Mammary epithelial cell (primary cell): ENCODE measurements at regions of chr6 and their contacts with region 1.

Region 1: GRCh38 chr6:137811121-137811915 is 55.7 kb upstream of the TNFAIP3 start:
- DNase-seq: peak; percentile 93
- H3K4me3 ChIP-seq: no peak overlapping the region
- H3K27ac ChIP-seq: peak overlapping the region; percentile 89
- H3K4me1 ChIP-seq: peaks cover 48% of the 10 kb centered on the region
- H3K27me3 ChIP-seq: no peaks in the 10 kb centered on the region
- CTCF ChIP-seq: no peak

Region 2: DNA sequence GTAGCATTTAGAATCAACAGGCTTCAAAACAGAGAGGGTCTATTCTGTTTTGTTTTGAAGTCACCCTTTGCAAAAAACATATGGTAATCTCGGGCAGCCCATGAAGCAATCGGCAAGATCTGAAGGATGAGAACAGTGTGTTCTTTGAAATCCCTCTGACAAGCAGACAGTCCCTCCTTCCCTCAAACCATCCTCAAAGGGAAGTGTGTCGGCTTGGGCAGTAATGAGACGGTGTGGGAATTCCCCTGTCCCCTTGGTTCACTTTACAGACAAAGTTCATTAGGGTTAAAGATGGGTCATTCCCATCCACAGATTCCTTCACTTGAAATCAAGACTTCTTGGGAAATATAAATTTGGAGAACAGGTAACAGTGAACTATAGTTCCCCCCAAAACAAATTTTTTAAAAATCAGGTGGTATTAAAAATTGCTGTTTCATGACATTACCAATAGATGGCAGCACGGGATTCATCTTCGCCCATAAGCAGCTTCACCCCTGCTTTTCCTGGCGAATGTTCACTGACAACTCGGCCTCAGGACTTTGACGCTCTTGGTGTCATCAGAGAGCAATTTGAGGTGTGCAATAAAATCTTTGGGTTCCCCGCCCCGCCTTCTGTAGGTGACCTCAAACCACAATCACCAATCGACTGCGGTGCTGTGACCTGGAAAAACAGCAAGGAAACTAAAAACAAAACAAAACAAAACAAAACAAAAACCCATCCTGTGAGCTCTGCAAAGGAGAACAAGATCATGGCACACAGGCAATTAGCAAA is 103.5 kb before region 1 on chr6:
- CTCF ChIA-PET with region 1: no interaction called
- dilution Hi-C with region 1: no loop called
- in situ Hi-C with region 1: loop called in 1 of 2 experiments (anchors 10 kb)
- intact Hi-C with region 1: loop called (anchors 2 kb)
- DNase-seq: peak; percentile 92
- H3K4me3 ChIP-seq: no peak overlapping the region
- H3K27ac ChIP-seq: peak overlapping the region; percentile 64
- H3K4me1 ChIP-seq: peaks cover 7% of the 10 kb centered on the region
- H3K27me3 ChIP-seq: no peaks in the 10 kb centered on the region
- CTCF ChIP-seq: peak; percentile 65 to 75

Region 3: GRCh38 chr6:137764464-137764863 is 46.9 kb before region 1 on chr6:
- CTCF ChIA-PET with region 1: no interaction called
- dilution Hi-C with region 1: no loop called
- in situ Hi-C with region 1: no loop called
- intact Hi-C with region 1: loop called (anchors 2 kb)
- DNase-seq: peak; percentile 92
- H3K4me3 ChIP-seq: no peak overlapping the region
- H3K27ac ChIP-seq: peak overlapping the region; percentile 83
- H3K4me1 ChIP-seq: peaks cover 41% of the 10 kb centered on the region
- H3K27me3 ChIP-seq: no peaks in the 10 kb centered on the region
- CTCF ChIP-seq: no peak

Region 4: GRCh38 chr6:137776786-137777686 is 34.3 kb before region 1 on chr6:
- CTCF ChIA-PET with region 1: interaction called, 11 read pairs
- dilution Hi-C with region 1: no loop called
- in situ Hi-C with region 1: no loop called
- intact Hi-C with region 1: no loop called
- DNase-seq: no peak
- H3K4me3 ChIP-seq: no peak overlapping the region
- H3K27ac ChIP-seq: no peak overlapping the region
- H3K4me1 ChIP-seq: no peaks in the 10 kb centered on the region
- H3K27me3 ChIP-seq: no peaks in the 10 kb centered on the region
- CTCF ChIP-seq: no peak

Region 5: DNA sequence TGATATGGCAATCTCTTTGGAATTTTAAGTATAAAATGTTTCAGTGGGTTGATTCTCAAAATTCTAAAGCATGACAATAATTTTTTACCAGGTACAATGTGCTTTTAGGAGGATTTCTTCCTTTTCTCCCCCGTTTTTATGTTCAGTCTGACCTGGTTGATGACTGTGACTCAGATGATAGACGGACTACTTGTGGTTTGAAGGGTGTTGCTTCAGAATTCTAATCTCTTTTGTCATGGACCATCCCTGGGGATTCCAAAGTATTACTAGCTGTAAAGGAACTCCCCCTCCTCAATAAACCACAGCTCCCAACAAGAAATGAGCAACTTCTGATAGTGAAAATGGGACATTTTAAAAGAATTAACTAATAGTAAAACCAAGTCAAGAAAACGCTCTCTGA is 20.8 kb after region 1 on chr6:
- CTCF ChIA-PET with region 1: no interaction called
- dilution Hi-C with region 1: no loop called
- in situ Hi-C with region 1: no loop called
- intact Hi-C with region 1: loop called (anchors 2 kb)
- DNase-seq: peak; percentile 93
- H3K4me3 ChIP-seq: no peak overlapping the region
- H3K27ac ChIP-seq: peak overlapping the region; percentile 84
- H3K4me1 ChIP-seq: peaks cover 61% of the 10 kb centered on the region
- H3K27me3 ChIP-seq: no peaks in the 10 kb centered on the region
- CTCF ChIP-seq: no peak

Region 6: GRCh38 chr6:137853569-137854213 is 42.4 kb after region 1 on chr6:
- CTCF ChIA-PET with region 1: no interaction called
- dilution Hi-C with region 1: no loop called
- in situ Hi-C with region 1: no loop called
- intact Hi-C with region 1: loop called (anchors 2 kb)
- DNase-seq: peak; percentile 89
- H3K4me3 ChIP-seq: no peak overlapping the region
- H3K27ac ChIP-seq: peak overlapping the region; percentile 89
- H3K4me1 ChIP-seq: peaks cover 26% of the 10 kb centered on the region
- H3K27me3 ChIP-seq: no peaks in the 10 kb centered on the region
- CTCF ChIP-seq: no peak

Region 7: GRCh38 chr6:137873273-137873762 is 62.0 kb after region 1 on chr6:
- CTCF ChIA-PET with region 1: no interaction called
- dilution Hi-C with region 1: loop called (anchors 5 kb)
- in situ Hi-C with region 1: no loop called
- intact Hi-C with region 1: no loop called
- DNase-seq: peak; percentile 96
- H3K4me3 ChIP-seq: peak overlapping the region; percentile 12 to 32 (median 18)
- H3K27ac ChIP-seq: peak overlapping the region; percentile 95
- H3K4me1 ChIP-seq: peaks cover 52% of the 10 kb centered on the region
- H3K27me3 ChIP-seq: no peaks in the 10 kb centered on the region
- CTCF ChIP-seq: no peak